Heart left ventricle (tissue), 16 donors: ENCODE measurements at regions of chr5 and their contacts with region 1.

Region 1: GRCh38 chr5:175434800-175435199 is 9.2 kb downstream of the DRD1 start:
- DNase-seq: no peak
- ATAC-seq: no peak
- H3K4me3 ChIP-seq: no peak overlapping the region
- H3K27ac ChIP-seq: no peak overlapping the region
- H3K4me1 ChIP-seq: no peaks in the 10 kb centered on the region
- H3K27me3 ChIP-seq: peaks cover 0 to 28% (median 3%) of the 10 kb centered on the region in 9 donors
- CTCF ChIP-seq: no peak
- POLR2A ChIP-seq: no peak

Region 2: DNA sequence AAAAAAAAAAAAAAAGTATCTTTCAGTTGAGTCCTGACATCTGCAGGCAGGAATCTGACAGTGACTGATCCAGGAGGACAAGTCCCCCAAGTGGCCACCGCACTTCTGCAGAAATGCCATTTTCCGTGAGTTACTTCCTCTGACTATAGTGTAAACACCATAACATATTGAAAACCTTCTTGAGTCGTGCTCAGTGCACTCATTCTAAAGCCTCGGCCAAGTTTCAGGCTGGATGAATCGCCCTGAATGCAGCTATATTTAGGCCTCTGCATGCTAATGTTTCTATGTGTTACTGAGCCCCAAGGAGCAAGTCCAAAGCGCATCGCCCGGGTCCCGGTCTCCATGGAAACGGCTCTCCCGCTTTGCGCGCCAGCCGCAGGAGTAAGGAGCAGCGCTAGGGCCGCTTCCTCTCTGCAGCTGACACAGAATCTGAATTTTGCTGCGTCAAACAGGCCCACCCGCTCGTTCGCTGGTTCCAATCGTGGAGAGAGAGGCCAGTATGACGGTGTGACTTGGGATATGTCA is 375.1 kb before region 1 on chr5:
- intact Hi-C with region 1: no loop called
- DNase-seq: peak in 4 of 5 donors; percentile 27 to 41 (median 38)
- ATAC-seq: peak in 3 of 4 donors; percentile 38 to 60 (median 55)
- H3K4me3 ChIP-seq: peak overlapping the region in 8 of 12 donors; percentile 1 to 39 (median 20)
- H3K27ac ChIP-seq: peak overlapping the region in 1 of 12 donors; percentile 25
- H3K4me1 ChIP-seq: peaks cover 0 to 6% (median 0%) of the 10 kb centered on the region in 12 donors
- H3K27me3 ChIP-seq: no peaks in the 10 kb centered on the region
- CTCF ChIP-seq: peak in 3 of 12 donors; percentile 14 to 23 (median 17)
- POLR2A ChIP-seq: no peak

Region 3: GRCh38 chr5:175290379-175290778 is 144.4 kb before region 1 on chr5:
- intact Hi-C with region 1: no loop called
- DNase-seq: no peak
- ATAC-seq: no peak
- H3K4me3 ChIP-seq: no peak overlapping the region
- H3K27ac ChIP-seq: no peak overlapping the region
- H3K4me1 ChIP-seq: no peaks in the 10 kb centered on the region
- H3K27me3 ChIP-seq: peaks cover 0 to 16% (median 0%) of the 10 kb centered on the region in 9 donors
- CTCF ChIP-seq: no peak
- POLR2A ChIP-seq: no peak

Region 4: GRCh38 chr5:175378444-175379028 is 56.3 kb before region 1 on chr5:
- intact Hi-C with region 1: no loop called
- DNase-seq: no peak
- ATAC-seq: no peak
- H3K4me3 ChIP-seq: no peak overlapping the region
- H3K27ac ChIP-seq: no peak overlapping the region
- H3K4me1 ChIP-seq: no peaks in the 10 kb centered on the region
- H3K27me3 ChIP-seq: peaks cover 0 to 10% (median 0%) of the 10 kb centered on the region in 9 donors
- CTCF ChIP-seq: no peak
- POLR2A ChIP-seq: no peak

Region 5: DNA sequence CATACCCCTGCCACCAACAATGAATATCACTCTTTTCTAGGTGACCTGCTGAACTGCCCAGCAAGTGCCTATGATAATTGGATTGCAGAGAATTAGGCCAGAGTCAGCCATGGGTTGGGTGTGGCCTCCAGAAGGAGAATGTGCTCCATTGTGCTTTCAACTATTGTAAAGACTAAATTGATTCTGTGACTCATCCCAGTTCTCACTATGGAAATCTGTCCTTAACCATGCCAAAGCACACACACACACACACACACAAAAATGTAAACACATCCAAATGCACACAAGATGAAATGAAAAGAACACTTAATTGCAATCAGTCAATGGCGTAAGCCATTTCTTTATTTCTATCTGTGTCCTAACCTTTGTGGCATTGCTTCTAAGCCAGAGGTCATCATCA is 16.5 kb before region 1 on chr5:
- intact Hi-C with region 1: loop called in 1 of 10 experiments (anchors 1 kb)
- DNase-seq: no peak
- ATAC-seq: no peak
- H3K4me3 ChIP-seq: no peak overlapping the region
- H3K27ac ChIP-seq: no peak overlapping the region
- H3K4me1 ChIP-seq: no peaks in the 10 kb centered on the region
- H3K27me3 ChIP-seq: peaks cover 0 to 7% (median 0%) of the 10 kb centered on the region in 9 donors
- CTCF ChIP-seq: no peak
- POLR2A ChIP-seq: no peak